ENCODE measurements at regions of chr17 and their contacts with region 1.

Region 1: DNA sequence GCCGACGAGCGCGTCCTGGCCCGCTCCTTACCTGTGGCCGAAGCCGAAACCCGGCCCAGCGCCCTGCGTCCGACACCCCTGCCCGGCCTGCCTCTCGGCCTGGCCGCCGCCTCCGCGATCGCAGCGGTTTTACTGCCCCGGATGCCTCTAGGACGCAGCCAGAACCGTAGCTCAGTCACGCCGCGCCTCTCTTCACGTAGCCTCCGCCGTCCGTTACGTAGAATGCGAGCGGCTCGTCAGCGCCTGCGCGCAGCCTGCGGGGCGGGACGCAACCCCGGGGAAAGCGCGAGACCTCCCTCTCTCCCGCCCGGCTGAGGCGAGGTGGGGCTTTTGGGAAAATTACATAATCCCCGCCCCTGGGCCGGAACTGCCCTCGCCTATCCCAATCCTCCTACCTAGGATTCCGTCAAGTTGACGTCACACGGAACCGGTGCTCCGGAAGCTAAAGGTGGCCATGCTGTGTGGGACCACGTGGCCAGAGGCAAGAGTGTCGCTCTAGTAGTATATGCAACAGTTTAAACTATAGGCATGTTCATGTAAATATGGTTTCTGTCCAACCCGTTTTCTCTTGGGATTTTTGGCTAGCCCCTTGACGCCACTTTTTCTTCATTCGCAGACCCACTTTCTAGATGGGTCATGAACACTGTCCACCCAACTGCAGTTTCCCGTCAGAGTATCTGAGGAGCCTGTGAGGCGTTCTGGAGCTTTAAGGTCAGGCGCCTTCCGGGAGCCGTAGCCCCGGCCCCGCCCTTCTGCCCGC is at the start of gene CCDC47:
- DNase-seq: peak; percentile 99
- total RNA-seq, gene CCDC47: 52.5 to 58.5 TPM

Region 2: DNA sequence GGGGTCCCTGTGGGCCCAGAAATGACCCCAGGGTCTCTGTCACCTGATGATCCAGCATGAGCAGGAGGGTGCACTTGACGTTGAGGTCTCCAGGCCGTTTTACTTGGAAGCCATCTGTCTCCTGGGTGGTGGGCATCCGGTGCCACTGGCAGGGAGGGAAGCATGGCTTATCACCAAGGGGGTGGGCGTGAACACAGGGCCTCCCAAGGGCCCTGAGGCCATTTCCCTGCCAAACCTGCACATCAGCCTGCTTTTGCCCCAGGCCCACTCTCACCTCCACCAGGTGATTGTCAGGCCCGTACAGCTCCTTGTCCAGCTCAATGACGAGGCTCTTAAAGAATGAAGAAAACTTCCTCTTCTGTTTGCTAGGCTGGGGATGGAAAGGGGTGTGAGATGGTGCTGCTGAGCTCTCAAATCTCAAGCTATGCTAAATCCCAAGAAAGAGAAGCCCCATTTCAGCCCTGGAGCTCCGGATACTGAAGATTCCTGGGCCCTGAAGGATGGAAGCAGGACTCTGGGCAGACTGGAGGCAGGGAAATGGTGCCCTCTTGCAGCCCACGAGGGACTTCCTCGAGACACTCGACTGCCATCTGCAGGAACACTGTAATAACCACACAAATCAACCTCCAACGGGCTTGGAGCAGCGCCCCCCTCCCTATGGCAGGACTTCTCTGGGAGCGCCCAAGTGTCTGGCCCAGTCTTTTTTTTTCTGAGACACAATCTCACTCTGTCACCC is 61.0 kb after region 1 on chr17:
- intact Hi-C with region 1: loop called in 1 of 2 experiments (anchors 10 kb)
- DNase-seq: no peak

Measured in posterior vena cava (tissue), 2 donors.